ENCODE measurements at regions of chr17 and their contacts with region 1.

Region 1: DNA sequence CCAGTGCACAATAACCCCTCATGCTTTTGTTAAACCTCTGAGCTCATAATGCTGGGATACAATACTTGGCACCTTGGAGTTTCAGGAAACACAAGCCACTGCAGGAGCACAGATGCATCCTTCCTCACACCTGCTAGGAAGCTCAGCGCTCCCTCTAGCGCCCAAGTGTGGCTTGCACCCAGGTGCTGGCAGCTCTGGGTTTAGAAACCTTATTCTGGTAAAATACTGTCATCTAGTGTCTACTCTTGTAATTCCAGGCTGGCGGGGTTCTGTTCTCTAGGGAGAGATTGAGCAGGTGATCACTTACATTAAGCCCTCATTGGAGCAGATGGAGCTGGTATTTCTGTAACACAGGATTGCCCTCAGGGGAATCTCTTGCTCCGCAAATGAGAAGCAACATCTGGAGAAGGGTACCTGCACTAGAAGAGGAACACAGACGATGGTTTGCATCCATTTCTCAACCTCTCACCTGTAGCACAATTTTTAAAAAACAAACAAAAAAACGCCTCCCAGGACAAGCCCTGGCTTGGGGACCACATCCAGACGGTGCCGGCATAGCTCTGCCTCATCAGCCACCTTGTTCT is 1.5 kb downstream of the CCL1 start:
- DNase-seq: peak; percentile 79
- H3K4me3 Mint-ChIP-seq: peak overlapping the region; percentile 57
- H3K27ac Mint-ChIP-seq: no peak overlapping the region
- H3K4me1 Mint-ChIP-seq: peaks cover 59% of the 10 kb centered on the region
- H3K27me3 Mint-ChIP-seq: peaks cover 15% of the 10 kb centered on the region

Region 2: DNA sequence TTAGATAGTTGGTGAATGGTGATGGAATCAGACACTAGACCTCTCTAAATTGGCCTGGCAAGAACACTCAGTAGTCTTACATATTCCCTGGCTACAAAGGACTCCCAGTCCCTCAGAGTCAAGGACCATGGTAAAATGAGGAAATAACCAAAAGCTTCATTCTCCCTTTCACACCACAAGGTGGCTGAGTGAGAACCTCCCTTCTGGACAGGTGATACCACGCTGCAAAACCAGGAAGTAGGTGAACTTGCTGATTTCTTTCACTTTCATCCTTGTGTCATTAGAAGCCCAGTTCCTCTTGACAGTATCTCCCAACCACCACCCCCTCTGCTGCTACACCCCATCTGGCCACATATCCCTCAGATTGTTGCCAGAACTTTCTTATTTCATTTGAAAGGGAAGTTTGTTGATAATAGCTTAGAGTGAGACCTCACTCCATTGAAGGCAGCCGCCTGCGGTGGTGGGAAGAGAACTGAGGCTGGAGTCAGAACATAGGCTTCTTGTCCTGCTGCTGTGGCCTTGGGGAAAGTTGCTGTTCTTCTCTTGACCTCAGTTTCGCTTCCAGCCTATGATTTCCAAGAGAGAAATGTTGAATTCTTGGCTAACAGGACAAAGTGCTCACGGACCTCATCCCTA is 397.1 kb before region 1 on chr17:
- intact Hi-C with region 1: loop called (anchors 10 kb)
- DNase-seq: peak; percentile 30
- H3K4me3 Mint-ChIP-seq: peak overlapping the region; percentile 38
- H3K27ac Mint-ChIP-seq: no peak overlapping the region
- H3K4me1 Mint-ChIP-seq: peaks cover 48% of the 10 kb centered on the region
- H3K27me3 Mint-ChIP-seq: peaks cover 1% of the 10 kb centered on the region

Region 3: GRCh38 chr17:34171245-34171818 is 190.2 kb before region 1 on chr17:
- intact Hi-C with region 1: loop called (anchors 1 kb)
- DNase-seq: peak; percentile 37
- H3K4me3 Mint-ChIP-seq: no peak overlapping the region
- H3K27ac Mint-ChIP-seq: no peak overlapping the region
- H3K4me1 Mint-ChIP-seq: no peaks in the 10 kb centered on the region
- H3K27me3 Mint-ChIP-seq: peaks cover 10% of the 10 kb centered on the region

Region 4: DNA sequence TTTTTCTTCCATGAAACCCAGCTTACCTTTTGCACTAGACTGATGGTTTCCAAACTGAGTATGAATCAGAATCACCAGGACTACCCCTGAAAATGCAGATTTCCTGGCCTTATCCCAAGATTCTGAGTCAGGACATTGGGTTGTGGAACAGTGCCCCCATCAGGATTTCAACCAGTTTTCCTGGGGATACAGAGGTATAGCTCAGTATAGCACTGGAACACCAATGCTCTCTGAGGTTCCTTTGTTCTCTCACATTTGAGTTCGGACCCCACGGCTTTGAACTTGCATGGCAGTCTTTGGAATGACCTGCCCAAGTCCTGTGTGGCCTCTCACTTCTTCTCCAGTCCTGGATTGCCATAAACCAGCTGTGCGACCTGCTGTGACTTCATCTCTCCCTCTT is 55.1 kb before region 1 on chr17:
- intact Hi-C with region 1: loop called (anchors 5 kb)
- DNase-seq: no peak
- H3K4me3 Mint-ChIP-seq: no peak overlapping the region
- H3K27ac Mint-ChIP-seq: no peak overlapping the region
- H3K4me1 Mint-ChIP-seq: peaks cover 57% of the 10 kb centered on the region
- H3K27me3 Mint-ChIP-seq: peaks cover 7% of the 10 kb centered on the region

Region 5: DNA sequence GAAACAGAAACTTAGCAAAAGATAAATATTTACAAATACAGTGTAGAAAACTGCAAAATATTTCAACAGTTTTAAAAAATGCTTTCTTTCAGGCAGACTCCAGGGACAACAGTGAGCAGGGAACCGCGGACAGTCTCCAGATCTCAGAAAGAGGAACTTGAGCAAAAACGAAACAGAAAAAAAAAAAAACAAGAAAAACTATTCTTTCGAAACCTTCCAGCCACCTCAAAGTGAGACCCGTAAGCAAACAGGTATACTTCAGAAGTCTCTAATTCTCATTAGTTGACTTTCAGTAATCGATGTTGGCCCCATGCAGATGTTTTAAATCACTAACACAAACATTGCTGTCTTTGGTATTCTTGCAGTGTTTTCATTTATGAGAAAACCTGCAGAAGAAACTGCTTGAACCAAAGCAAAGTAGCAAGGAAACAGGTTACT is 17.1 kb after region 1 on chr17:
- intact Hi-C with region 1: loop called (anchors 1 kb)
- DNase-seq: peak; percentile 32
- H3K4me3 Mint-ChIP-seq: peak overlapping the region; percentile 62
- H3K27ac Mint-ChIP-seq: peak overlapping the region; percentile 77
- H3K4me1 Mint-ChIP-seq: peaks cover 75% of the 10 kb centered on the region
- H3K27me3 Mint-ChIP-seq: peaks cover 12% of the 10 kb centered on the region

Region 6: DNA sequence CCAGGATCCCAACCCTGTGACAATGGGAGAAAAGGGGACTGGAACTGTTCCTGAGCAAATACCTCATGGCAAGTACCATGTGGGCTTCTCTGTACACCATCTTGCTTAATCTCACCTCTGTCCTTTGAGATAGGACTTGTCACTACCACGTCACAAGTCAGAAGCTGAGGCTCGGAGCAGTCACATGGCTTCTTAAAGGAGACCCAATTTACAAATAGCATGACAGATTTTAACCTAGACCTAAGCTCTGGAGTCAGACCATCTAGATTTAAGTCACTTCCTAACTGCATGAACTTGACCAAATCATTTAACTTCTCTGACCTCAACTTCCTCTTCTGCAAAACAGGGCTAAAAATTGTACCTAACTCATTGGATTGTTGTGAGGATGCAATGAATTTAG is 37.4 kb after region 1 on chr17:
- intact Hi-C with region 1: loop called (anchors 5 kb)
- DNase-seq: no peak
- H3K4me3 Mint-ChIP-seq: no peak overlapping the region
- H3K27ac Mint-ChIP-seq: peak overlapping the region; percentile 27
- H3K4me1 Mint-ChIP-seq: peaks cover 32% of the 10 kb centered on the region
- H3K27me3 Mint-ChIP-seq: peaks cover 29% of the 10 kb centered on the region

Measured in activated T-helper 1 cell treated with anti-CD3 and anti-CD28 coated beads, Interleukin-12 subunit alpha, Interleukin-12 subunit beta, Interleukin-2, Interleukin-4 antibody, amounts not matched to agents 30 ng/mL and 10 ng/mL and 1 ng/mL, durations not matched to agents 14 hours and 24 hours and 36 hours (primary cell).